Panc1 (cell line): ENCODE measurements at regions of chr5 and their contacts with region 1.

Region 1: DNA sequence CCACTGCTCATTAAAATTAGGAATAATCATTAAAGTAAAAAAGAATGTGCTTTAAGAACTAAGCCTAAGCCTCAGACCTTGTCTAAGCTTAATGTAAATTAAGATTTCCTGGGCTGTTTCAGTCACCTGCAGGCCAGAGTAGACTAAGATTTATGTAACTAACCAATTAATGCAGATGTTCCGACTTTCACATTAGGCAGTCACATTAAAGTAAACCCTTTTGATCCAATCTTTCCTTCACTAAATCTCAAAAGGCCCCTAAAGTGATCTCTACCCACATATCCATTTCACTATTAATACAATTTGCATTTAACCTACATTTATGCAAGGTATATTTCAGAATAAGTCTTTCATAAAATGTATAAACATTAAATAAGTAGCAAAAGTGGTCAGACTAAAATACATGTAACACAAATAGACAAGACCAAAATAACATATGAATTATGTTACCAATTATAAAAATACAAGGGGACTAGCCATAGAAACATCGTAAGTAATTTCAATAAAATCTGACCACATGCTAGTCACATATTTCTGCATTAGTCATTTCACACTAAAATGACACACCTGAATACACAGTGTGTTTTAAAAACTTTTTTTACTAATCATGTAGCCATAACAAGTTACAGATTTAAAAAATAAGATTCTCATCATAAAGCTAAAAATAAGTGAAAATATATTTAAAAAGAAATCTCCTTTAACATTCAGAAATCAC is 7.7 kb downstream of the NR3C1 start:
- DNase-seq: no peak
- ATAC-seq: no peak
- H3K4me3 ChIP-seq: peak overlapping the region in 1 of 2 experiments; percentile 91; a peak in 1 of 4 replicates
- H3K27ac ChIP-seq: peak overlapping the region; percentile 73; the same call in 1 of the 2 replicates
- H3K4me1 ChIP-seq: peaks cover 59% of the 10 kb centered on the region
- H3K27me3 ChIP-seq: no peaks in the 10 kb centered on the region
- CTCF ChIP-seq: no peak

Region 2: GRCh38 chr5:143066556-143067281 is 329.1 kb before region 1 on chr5:
- CTCF ChIA-PET with region 1: no interaction called
- POLR2A ChIA-PET with region 1: no interaction called
- in situ Hi-C with region 1: no loop called
- intact Hi-C with region 1: no loop called
- DNase-seq: no peak
- ATAC-seq: no peak
- H3K4me3 ChIP-seq: no peak overlapping the region
- H3K27ac ChIP-seq: no peak overlapping the region
- H3K4me1 ChIP-seq: 0 out of 2 replicates have a peak, but pooled peaks cover 3% of the 10 kb centered on the region
- H3K27me3 ChIP-seq: no peaks in the 10 kb centered on the region
- CTCF ChIP-seq: no peak

Region 3: DNA sequence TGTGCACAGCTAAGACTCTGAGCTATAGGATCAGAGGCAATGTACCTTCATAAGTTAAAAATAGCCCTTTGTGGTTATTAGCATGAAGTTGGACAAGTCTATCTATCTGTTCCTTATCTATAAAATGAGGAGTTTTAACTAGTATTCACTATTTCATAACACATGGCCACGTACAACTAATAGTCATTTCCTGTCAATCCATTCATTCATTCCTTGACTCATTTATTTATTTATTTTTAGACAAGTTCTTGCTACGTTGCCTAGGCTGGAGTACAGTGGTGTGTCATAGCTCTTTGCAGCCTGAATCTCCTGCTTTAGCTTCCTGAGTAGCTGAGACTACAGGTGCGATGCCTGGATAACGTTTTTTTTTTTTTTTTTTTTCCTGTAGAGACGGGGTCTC is 84.4 kb before region 1 on chr5:
- CTCF ChIA-PET with region 1: no interaction called
- POLR2A ChIA-PET with region 1: interaction called, 5 read pairs
- in situ Hi-C with region 1: no loop called
- intact Hi-C with region 1: loop called (anchors 10 kb)
- DNase-seq: peak; percentile 50
- ATAC-seq: peak; percentile 68; the same call in 1 of the 2 replicates
- H3K4me3 ChIP-seq: no peak overlapping the region
- H3K27ac ChIP-seq: peak overlapping the region; percentile 4; the same call in 1 of the 2 replicates
- H3K4me1 ChIP-seq: peaks cover 26% of the 10 kb centered on the region
- H3K27me3 ChIP-seq: no peaks in the 10 kb centered on the region
- CTCF ChIP-seq: no peak

Region 4: DNA sequence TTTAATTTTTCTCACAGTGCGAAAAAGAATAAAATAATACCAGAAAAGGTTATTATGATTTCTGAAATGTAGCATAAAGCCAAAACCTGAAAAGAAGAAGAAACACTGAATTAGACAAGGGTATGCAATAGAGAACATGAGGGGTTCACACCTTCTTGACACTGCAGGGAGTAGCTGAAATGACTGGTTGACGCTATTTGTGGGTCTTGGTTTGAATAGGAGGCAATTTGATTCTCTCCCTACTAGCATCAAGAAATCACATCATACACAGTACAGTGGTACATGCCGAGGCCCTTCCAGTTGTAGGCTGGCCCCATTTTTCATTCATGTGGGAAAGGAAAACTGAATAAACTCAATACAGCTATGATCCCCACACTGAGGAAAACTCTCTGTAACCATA is 60.9 kb before region 1 on chr5:
- CTCF ChIA-PET with region 1: no interaction called
- POLR2A ChIA-PET with region 1: no interaction called
- in situ Hi-C with region 1: no loop called
- intact Hi-C with region 1: no loop called
- DNase-seq: no peak
- ATAC-seq: no peak
- H3K4me3 ChIP-seq: no peak overlapping the region
- H3K27ac ChIP-seq: no peak overlapping the region
- H3K4me1 ChIP-seq: peaks cover 7% of the 10 kb centered on the region; the same call in 1 of the 2 replicates
- H3K27me3 ChIP-seq: no peaks in the 10 kb centered on the region
- CTCF ChIP-seq: no peak

Region 5: GRCh38 chr5:143448518-143448917 is 52.7 kb after region 1 on chr5:
- CTCF ChIA-PET with region 1: no interaction called
- POLR2A ChIA-PET with region 1: no interaction called
- in situ Hi-C with region 1: no loop called
- intact Hi-C with region 1: no loop called
- DNase-seq: no peak
- ATAC-seq: no peak
- H3K4me3 ChIP-seq: no peak overlapping the region
- H3K27ac ChIP-seq: no peak overlapping the region
- H3K4me1 ChIP-seq: no peaks in the 10 kb centered on the region
- H3K27me3 ChIP-seq: no peaks in the 10 kb centered on the region
- CTCF ChIP-seq: peak; percentile 29

Region 6: GRCh38 chr5:143662020-143662419 is 266.2 kb after region 1 on chr5:
- CTCF ChIA-PET with region 1: no interaction called
- POLR2A ChIA-PET with region 1: no interaction called
- in situ Hi-C with region 1: no loop called
- intact Hi-C with region 1: no loop called
- DNase-seq: no peak
- ATAC-seq: no peak
- H3K4me3 ChIP-seq: no peak overlapping the region
- H3K27ac ChIP-seq: no peak overlapping the region
- H3K4me1 ChIP-seq: peaks cover 3% of the 10 kb centered on the region; the same call in 1 of the 2 replicates
- H3K27me3 ChIP-seq: no peaks in the 10 kb centered on the region
- CTCF ChIP-seq: no peak